ENCODE measurements at regions of chr11 and their contacts with region 1.

Region 1: DNA sequence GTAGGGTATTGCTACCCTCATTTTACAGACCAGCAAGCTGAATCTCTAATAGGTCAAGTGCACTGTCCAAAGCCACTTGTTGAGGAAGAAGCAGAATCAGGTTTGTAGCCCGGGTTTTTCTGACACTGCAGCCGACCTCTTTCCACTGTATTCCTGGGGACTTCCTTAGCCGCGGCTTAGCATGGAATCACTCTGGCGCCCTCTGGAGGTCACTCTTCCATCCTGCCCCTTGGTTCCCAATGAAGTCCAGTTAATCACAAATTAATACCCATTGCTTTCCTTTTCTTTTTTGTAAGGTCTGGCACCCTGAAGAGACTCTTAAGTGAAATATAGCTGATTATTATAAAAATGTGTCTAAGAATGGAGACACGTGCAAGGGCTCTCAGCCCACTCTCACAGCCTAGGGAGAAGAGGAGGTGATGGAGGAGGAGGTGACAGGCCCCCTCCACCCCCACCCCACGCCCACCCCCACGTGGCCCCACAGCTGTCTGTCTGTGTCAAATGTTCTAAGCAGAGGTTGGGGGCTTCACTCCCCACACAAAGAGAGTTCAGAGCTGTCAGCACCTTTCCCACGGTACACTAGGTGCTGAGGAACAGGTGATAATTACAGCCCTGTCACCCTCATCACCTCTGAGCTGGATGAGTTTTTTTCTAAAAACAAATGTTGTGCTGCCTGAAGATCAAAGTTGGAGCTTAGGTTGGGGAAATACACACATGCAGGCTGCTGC is 57.7 kb upstream of the DRD2 start:
- DNase-seq: peak; percentile 72
- ATAC-seq: peak; percentile 78

Region 2: DNA sequence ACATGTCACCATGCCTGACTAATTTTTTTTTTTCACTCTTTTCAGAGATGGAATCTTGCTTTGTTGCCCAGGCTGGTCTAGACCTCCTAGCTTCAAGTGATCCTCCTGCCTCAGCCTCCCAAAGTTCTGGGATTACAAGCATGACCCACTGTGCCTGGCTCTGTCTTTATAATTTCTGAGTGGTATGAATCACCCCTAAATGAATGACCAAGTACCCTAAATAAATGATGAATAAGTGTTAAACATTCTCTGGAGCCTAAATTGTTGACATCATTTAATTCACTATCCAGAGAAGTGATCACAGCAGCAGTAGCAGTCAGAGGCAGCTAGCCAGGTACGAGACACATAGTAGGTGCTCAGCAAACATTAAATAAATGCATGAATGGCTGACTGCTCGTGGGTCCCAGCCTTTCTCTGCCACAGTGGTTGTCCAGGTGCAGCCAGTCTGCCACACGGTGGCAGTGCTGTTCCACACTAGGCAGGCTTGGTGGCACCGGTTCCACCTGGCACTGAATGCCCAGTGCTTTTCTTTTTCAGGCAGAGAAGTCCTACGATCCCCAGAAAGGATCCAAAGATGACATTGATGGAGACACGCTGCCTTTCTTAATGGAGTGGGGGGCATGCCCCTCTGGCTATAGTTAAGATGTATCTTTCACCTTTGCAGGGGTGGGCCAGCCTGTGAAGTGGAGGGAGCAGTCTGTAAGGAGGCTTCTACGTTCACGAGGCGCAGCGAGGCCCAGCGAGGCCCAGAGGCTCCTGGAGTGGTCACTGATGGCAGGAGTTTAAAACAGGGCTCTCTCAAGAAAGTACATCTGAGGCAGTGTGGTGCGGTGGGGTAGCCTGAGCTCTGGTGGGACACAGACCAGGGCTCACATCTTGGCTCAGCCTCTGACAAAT is 227.2 kb before region 1 on chr11:
- intact Hi-C with region 1: loop called (anchors 2 kb)
- DNase-seq: peak; percentile 87
- ATAC-seq: peak; percentile 88

Region 3: GRCh38 chr11:113376156-113376555 is 156.7 kb before region 1 on chr11:
- intact Hi-C with region 1: loop called (anchors 10 kb)
- DNase-seq: no peak
- ATAC-seq: no peak

Region 4: DNA sequence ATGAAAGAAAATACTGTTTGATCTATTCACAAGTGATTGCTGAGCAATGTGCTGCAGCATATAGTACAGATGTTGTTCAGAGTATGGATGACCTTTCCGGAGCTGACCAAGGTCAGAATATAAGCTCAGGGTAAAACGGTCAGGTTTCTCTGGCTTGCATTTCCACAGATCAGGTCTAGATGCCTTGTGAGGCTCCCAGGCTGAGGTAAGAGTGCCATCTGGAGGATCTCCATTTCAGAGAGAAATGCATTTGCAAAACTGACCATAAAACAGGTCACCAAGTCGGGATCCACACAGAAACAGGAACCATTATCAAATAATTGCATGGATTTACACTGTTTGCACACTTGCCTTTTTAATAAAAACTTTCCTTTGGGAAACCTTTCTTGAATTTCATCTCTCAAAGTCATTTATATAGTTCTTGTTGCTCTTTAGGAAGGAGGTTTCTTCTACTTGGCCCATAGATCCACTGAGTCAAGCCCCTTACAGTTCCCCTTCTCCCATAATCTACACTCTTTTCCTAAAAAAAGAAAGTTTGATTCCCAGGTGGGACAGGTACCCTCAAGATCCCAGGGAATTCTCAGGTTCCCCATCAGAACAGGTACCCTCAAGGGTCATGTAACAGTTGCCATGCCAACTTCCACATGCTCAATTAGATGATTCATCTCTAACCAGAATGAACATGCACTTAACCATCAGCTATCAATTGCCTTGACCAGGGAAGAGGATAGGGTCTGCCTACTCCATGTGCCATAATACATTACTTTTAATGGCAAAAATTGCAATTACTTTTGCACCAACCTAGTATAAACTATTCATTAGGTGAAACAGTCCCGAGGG is 198.2 kb after region 1 on chr11:
- intact Hi-C with region 1: loop called (anchors 1 kb)
- DNase-seq: no peak
- ATAC-seq: peak; percentile 42